Activated CD8-positive, alpha-beta T cell treated with anti-CD3 and anti-CD28 coated beads for 36 hours (primary cell): ENCODE measurements at regions of chr7 and their contacts with region 1.

Region 1: GRCh38 chr7:5088906-5089305 is 43.2 kb downstream of the RBAK start:
- DNase-seq: no peak
- ATAC-seq: no peak
- H3K4me3 Mint-ChIP-seq: no peak overlapping the region
- H3K27ac Mint-ChIP-seq: no peak overlapping the region
- H3K4me1 Mint-ChIP-seq: peaks cover 3% of the 10 kb centered on the region
- H3K27me3 Mint-ChIP-seq: no peaks in the 10 kb centered on the region
- CTCF ChIP-seq: no peak

Region 2: GRCh38 chr7:4399121-4399520 is 689.8 kb before region 1 on chr7:
- CTCF ChIA-PET with region 1: no interaction called
- POLR2A ChIA-PET with region 1: no interaction called
- intact Hi-C with region 1: no loop called
- DNase-seq: no peak
- ATAC-seq: no peak
- H3K4me3 Mint-ChIP-seq: no peak overlapping the region
- H3K27ac Mint-ChIP-seq: no peak overlapping the region
- H3K4me1 Mint-ChIP-seq: no peaks in the 10 kb centered on the region
- H3K27me3 Mint-ChIP-seq: peaks cover 3% of the 10 kb centered on the region
- CTCF ChIP-seq: no peak

Region 3: DNA sequence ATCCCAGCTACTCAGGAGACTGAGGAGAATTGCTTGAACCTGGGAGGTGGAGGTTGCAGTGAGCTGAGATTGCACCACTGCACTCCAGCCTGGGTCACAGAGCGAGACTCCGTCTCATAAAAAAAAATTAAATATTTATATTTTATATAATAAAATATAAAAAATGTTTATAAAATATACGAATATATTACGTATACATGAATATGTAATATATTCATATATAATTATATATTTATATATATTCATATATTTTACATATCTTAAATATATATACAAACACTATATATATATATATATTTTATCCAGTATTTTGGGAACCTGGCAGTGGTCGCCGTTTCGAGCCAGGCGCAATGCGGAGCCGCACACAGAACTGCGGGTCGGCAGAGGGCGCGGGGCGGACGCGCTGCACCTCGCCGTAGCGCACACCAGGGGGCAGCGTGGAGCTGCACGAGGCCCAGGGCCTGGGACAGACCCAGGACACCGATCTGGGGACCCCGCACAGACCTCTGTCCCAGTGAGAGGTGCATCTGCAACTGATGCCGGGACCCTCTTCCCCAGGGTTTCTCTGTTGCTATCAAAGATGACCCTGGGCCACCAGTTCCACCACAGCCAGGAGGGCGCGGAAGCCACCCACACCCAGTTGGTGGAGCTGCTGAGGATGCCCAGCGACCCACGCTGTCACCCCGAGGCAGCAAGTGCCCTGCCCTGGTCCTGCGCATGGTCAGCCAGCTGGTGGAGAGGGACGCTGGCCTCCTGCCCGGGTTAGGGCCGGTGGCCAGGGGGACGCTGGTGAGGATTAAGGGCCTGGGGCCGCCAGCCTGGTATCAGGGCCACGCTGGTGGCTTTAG is 290.8 kb before region 1 on chr7:
- CTCF ChIA-PET with region 1: interaction called, 19 read pairs
- POLR2A ChIA-PET with region 1: no interaction called
- intact Hi-C with region 1: no loop called
- DNase-seq: peak; percentile 68
- ATAC-seq: peak; percentile 100
- H3K4me3 Mint-ChIP-seq: no peak overlapping the region
- H3K27ac Mint-ChIP-seq: no peak overlapping the region
- H3K4me1 Mint-ChIP-seq: no peaks in the 10 kb centered on the region
- H3K27me3 Mint-ChIP-seq: no peaks in the 10 kb centered on the region
- CTCF ChIP-seq: peak; percentile 98

Region 4: GRCh38 chr7:5132539-5132938 is 43.6 kb after region 1 on chr7:
- CTCF ChIA-PET with region 1: no interaction called
- POLR2A ChIA-PET with region 1: no interaction called
- intact Hi-C with region 1: no loop called
- DNase-seq: no peak
- ATAC-seq: no peak
- H3K4me3 Mint-ChIP-seq: no peak overlapping the region
- H3K27ac Mint-ChIP-seq: no peak overlapping the region
- H3K4me1 Mint-ChIP-seq: peaks cover 21% of the 10 kb centered on the region
- H3K27me3 Mint-ChIP-seq: no peaks in the 10 kb centered on the region
- CTCF ChIP-seq: no peak